HepG2 (cell line): ENCODE measurements at regions of chr19 and their contacts with region 1.

Region 1: DNA sequence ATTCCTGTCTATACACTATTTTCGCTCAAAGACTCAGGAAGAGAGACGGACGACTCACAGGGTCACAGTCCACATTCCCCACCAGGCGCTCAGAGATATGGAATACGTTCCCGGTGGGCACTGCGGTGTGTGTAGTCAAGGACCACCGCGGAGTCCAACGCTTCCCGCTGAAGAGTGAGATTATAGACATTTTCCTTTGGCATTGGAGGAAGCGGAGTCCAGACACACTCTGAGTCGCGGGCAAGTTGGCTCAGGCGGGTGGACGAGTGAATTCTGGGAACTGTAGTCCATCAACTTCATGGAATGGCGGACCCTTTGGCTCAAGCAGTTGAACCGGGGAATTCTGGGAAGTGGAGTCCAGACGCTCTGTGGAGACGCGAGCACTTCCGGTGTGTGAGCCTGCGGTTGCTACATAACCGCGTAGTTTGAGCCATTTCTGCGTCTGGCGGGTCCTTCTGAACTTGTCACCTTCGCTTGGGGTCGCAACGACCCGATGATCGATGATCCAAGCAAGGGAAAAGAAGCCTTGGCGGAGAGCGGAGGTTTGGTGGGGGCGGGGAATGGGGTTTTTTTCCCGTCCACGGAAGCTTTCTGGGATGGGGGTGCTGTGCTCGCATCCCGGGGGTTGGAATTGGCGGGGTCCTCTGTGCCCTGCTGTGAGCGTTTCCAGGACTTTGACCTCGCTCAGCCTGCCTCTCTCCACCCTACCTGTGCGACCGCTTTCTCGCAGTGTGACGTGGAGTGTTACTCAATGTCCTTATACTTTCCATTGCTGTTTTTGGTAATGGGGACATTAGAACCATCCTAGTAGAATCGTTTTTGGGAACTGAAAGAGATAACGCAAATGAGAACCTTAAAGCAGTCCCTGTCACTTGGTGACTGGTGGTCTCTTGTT is at the start of gene ZNF230:
- DNase-seq: peak; percentile 96
- ATAC-seq: peak; percentile 98
- H3K4me3 ChIP-seq: peak within 1 kb of the TSS; percentile 70 to 95 (median 81)
- H3K27ac ChIP-seq: peak within 1 kb of the TSS; percentile 60
- H3K4me1 ChIP-seq: peaks cover 6% of the 10 kb centered on the region
- H3K27me3 ChIP-seq: no peaks in the 10 kb centered on the region; a peak in 1 of 5 replicates
- CTCF ChIP-seq: no peak
- EP300 ChIP-seq: no peak
- POLR2A ChIP-seq: peak; percentile 57 to 58; a peak in 3 of 4 replicates
- RAD21 ChIP-seq: no peak
- total RNA-seq, gene ZNF230: 5.5 and 6.0 TPM in 2 replicates

Region 2: DNA sequence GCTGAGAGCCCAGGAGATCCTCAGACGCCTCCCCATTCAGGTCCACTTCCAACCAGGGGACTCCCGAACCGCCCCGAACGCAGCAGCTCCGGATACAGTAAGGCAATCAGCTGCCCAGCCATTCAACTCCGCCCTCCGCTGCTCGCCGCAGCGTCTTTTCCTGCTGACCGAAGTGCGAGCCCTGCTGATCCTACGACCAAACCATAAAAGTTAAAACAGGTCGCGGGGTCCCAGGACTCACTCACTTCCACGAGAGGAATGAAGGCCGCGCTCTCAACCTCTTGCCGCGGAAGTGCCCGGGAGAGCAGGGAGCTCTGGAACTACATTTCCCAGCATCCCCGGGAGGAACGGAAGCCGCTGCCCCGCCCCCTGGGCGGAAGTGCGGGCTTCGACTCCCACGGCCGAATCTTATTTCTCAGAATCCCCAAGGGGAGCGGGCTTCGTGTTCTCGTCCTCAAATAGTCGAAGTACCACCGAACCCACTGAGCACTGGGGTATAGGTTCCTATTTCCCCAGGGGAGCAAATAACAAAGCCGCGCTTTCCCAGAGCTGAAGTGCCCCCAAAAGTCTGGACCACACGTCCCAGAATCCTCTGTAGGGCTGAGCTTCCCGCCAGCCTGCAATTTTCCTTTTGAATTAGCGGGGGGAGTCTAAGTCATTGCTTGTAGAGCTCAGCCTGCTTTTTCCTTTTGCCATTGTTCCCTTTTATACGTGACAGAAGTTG is 67.7 kb before region 1 on chr19 and contains the start of gene ZNF45:
- CTCF ChIA-PET with region 1: no interaction called
- POLR2A ChIA-PET with region 1: interaction called, 8 read pairs
- in situ Hi-C with region 1: no loop called
- intact Hi-C with region 1: loop called (anchors 2 kb)
- DNase-seq: peak; percentile 88
- ATAC-seq: peak; percentile 98
- H3K4me3 ChIP-seq: peak within 1 kb of the TSS; percentile 81 to 94 (median 93)
- H3K27ac ChIP-seq: peak within 1 kb of the TSS; percentile 82
- H3K4me1 ChIP-seq: peaks cover 7% of the 10 kb centered on the region; the same call in 1 of the 2 replicates
- H3K27me3 ChIP-seq: no peaks in the 10 kb centered on the region
- CTCF ChIP-seq: no peak
- EP300 ChIP-seq: no peak
- POLR2A ChIP-seq: peak; percentile 72 to 74
- RAD21 ChIP-seq: 0 out of 2 replicates have a peak, but pooled peaks have one; percentile 3
- total RNA-seq, gene ZNF45: 11.3 and 13.0 TPM in 2 replicates

Region 3: DNA sequence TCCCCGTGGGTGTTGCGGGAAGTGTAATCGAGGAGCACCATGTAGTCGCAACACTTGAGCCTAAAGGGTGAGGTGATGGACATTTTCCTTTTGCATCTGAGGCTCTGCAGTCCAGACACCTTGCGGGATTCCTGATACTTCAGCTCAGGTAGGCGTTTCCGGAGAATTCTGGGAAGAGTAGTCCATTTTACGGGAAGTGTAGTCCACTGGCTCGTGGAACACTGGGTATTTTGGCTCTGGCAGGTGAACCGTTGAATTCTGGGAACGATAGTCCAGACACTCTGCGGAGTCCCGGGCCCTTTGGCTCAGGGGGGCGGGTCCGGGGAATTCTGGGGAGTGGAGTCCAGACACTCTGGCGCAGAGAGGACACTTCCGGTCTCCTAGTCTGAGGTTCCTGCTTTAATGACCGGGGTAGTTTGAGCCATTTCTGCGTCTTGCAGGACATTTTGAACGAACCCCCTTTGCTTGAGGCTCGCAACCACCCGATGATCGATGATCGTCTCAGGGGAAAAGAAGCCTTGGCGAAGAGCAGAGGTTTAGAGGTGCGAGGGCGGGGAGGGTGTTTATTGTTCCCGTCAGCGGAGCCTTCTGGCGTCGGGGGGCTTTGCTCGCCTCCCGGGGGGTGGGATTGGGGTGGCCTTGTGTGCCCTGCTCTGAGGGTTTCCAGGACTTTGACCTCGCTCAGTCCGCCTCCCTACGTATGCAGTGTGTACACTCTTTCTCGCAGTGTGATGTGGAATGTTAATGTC is 49.0 kb after region 1 on chr19 and contains the start of gene ZNF223:
- CTCF ChIA-PET with region 1: no interaction called
- POLR2A ChIA-PET with region 1: interaction called, 11 read pairs
- in situ Hi-C with region 1: no loop called
- intact Hi-C with region 1: no loop called
- DNase-seq: peak; percentile 94
- ATAC-seq: peak; percentile 99
- H3K4me3 ChIP-seq: peak within 1 kb of the TSS; percentile 73 to 78 (median 78)
- H3K27ac ChIP-seq: peak within 1 kb of the TSS; percentile 89
- H3K4me1 ChIP-seq: peaks cover 32% of the 10 kb centered on the region
- H3K27me3 ChIP-seq: no peaks in the 10 kb centered on the region; a peak in 1 of 5 replicates
- CTCF ChIP-seq: no peak
- EP300 ChIP-seq: peak in 1 of 2 experiments; percentile 30; a peak in 1 of 4 replicates
- POLR2A ChIP-seq: peak; percentile 62 to 78; a peak in 3 of 4 replicates
- RAD21 ChIP-seq: no peak
- total RNA-seq, gene ZNF223: 4.8 and 5.6 TPM in 2 replicates

Region 4: DNA sequence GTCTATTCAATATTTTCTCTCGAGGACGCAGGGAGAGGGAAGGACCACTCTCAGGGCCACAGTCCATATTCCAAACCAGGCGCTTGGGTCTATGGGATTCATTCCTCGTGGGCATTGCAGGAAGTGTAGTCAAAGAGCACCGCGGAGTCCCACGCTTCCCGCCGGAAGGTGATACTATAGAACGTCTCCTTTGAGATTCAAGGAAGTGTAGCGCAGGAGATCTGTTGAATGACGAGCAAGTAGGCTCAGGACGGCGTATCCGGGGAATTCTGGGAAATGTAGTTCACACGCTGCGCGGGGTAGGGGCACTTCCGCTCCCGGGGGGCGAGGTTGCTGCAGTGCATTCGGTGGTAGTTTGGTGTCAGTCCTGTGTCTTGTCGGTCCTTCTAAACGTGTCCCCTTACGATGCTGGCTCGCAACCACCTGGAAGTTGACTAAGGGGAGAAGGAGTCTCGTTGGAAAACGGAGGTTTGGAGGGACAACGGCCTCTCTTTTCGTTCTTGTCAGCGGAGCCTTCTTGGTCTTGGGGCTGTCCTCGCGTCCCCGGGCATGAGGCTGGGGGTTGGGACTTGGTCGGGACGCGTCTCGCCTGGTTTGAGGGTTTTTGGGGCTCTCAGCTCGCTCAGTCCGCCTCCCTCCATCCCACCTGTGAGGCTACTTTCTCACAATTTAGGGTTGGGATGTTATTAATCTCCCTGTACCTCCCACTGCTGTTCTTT is 69.2 kb after region 1 on chr19 and contains the start of gene ZNF284:
- CTCF ChIA-PET with region 1: no interaction called
- POLR2A ChIA-PET with region 1: no interaction called
- in situ Hi-C with region 1: no loop called
- intact Hi-C with region 1: loop called (anchors 10 kb)
- DNase-seq: peak; percentile 84
- ATAC-seq: peak; percentile 99
- H3K4me3 ChIP-seq: peak within 1 kb of the TSS; percentile 70 to 90 (median 83)
- H3K27ac ChIP-seq: peak within 1 kb of the TSS; percentile 55
- H3K4me1 ChIP-seq: peaks cover 17% of the 10 kb centered on the region
- H3K27me3 ChIP-seq: no peaks in the 10 kb centered on the region; a peak in 1 of 5 replicates
- CTCF ChIP-seq: no peak
- EP300 ChIP-seq: no peak
- POLR2A ChIP-seq: peak; percentile 47 to 80; a peak in 3 of 4 replicates
- RAD21 ChIP-seq: no peak
- total RNA-seq, gene ZNF284: 2.3 and 3.2 TPM in 2 replicates

Region 5: DNA sequence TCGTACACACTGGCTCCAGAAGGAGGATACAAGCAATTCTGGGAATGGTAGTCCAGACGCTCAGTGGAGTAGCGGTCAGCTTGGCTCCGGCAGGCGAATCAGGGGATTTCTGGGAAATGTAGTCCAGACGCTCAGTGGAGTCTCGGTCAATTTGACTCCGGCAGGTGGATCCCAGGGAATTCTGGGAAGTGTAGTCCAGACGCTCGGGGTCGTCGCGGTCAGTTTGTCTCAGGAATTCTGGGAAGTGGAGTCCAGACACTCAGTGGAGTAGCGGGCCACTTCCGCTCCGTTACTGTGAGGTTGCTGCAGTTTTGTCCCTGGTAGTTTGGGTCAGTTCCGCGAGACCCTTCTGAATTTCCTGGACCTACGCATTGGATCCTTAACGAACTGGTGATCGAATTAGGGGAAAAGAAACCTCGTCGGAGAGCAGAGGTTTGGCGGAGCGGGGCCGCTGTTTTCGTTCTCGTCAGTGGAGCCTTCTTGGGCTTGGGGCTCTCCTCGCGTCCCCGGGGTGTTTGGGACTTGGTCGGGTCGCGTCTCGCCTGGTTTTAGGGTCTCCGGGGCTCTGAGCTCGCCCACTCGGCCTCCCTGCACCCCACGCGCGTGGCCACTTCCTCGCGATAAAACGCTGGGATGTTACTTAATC is 110.4 kb after region 1 on chr19 and contains the start of gene ZNF225:
- CTCF ChIA-PET with region 1: no interaction called
- POLR2A ChIA-PET with region 1: no interaction called
- in situ Hi-C with region 1: no loop called
- intact Hi-C with region 1: loop called (anchors 10 kb)
- DNase-seq: peak; percentile 97
- ATAC-seq: peak; percentile 99
- H3K4me3 ChIP-seq: peak within 1 kb of the TSS; percentile 82 to 92 (median 82)
- H3K27ac ChIP-seq: peak within 1 kb of the TSS; percentile 51
- H3K4me1 ChIP-seq: peaks cover 14% of the 10 kb centered on the region
- H3K27me3 ChIP-seq: no peaks in the 10 kb centered on the region; a peak in 1 of 5 replicates
- CTCF ChIP-seq: no peak
- EP300 ChIP-seq: peak in 1 of 2 experiments; percentile 27; a peak in 1 of 4 replicates
- POLR2A ChIP-seq: peak; percentile 56 to 71
- RAD21 ChIP-seq: 0 out of 2 replicates have a peak, but pooled peaks have one; percentile 6
- total RNA-seq, gene ZNF225: 3.3 and 4.6 TPM in 2 replicates

Region 6: DNA sequence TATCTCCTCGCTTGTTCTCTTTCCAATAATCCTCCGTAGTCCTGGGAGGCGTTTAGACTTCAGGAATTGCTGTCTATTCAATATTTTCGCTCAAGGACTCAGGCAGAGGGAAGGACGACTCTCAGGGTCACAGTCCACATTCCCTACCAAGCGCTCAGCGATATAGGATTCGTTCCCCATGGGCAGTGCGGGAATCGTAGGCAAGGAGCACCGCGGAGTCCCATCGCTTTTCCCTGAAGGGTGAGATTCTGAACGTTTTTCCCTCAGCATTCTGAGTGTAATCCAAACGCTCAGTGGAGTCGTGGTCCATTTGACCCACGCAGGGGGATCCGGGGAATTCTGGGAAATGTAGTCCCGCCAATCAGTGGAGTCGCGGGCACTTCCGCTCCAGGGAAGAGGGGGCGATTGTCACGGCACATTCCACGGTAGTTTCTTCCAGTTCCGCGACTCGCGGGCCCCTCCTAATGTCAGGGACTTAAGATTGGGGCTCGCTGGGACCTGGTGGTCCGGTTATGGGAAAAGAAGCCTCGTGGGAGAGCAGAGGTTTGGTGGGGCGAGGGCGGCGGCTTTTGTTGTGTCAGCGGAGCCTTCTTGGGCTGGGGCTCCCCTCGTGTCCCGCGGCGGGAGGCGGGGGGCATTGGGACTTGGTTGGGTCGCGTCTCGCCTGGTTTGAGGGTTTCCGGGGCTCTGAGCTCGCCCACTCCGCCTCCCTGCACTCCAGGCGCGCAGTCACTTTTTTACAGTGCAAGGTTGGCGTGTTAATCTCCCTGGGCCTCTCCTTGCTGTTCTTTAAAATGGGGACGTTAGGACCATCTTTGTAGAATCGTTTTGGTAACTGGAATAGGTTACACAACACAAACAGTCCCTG is 138.6 kb after region 1 on chr19 and contains the start of gene ZNF234:
- CTCF ChIA-PET with region 1: no interaction called
- POLR2A ChIA-PET with region 1: no interaction called
- in situ Hi-C with region 1: no loop called
- intact Hi-C with region 1: loop called (anchors 5 kb)
- DNase-seq: peak; percentile 73
- ATAC-seq: peak; percentile 98
- H3K4me3 ChIP-seq: peak within 1 kb of the TSS; percentile 79 to 89 (median 82)
- H3K27ac ChIP-seq: peak within 1 kb of the TSS; percentile 75
- H3K4me1 ChIP-seq: peaks cover 4% of the 10 kb centered on the region; the same call in 1 of the 2 replicates
- H3K27me3 ChIP-seq: no peaks in the 10 kb centered on the region
- CTCF ChIP-seq: peak; percentile 36
- EP300 ChIP-seq: no peak
- POLR2A ChIP-seq: peak; percentile 58 to 83; a peak in 3 of 4 replicates
- RAD21 ChIP-seq: no peak
- total RNA-seq, gene ZNF234: 11.2 and 11.7 TPM in 2 replicates